Natural killer cell (primary cell): ENCODE measurements at regions of chr16 and their contacts with region 1.

Region 1: DNA sequence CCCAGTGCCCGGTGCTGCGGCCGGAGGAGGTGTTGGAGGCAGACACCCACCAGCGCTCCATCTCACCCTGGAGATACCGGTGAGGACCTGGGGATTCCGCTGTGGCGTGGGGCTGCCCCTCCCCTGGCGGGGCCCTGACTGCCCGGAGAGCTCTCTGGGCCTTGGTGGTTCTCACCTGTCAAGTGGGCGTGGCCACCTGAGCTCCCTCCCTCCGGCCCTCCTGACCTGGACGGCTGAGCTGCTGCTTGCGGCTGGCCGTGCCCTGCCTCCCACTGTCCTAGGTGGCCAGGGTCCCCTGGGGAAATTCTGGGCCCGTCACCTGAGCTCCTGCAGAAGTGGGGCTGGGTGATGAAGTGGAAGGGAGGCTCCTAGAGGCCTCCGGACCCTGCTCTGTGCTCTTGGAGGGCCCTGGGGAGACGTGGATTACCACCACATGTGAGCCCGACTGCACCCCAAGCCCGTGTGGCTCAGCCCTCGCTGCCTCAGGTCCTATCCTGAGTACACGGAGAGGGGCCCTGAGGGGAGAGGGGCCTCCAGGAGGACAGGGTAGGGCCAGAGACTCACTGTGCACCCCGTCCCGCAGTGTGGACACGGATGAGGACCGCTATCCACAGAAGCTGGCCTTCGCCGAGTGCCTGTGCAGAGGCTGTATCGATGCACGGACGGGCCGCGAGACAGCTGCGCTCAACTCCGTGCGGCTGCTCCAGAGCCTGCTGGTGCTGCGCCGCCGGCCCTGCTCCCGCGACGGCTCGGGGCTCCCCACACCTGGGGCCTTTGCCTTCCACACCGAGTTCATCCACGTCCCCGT is 1.1 kb downstream of the IL17C start:
- DNase-seq: peak; percentile 37 to 40
- ATAC-seq: peak in 1 of 3 donors; percentile 7
- H3K4me3 ChIP-seq: no peak overlapping the region
- H3K4me3 Mint-ChIP-seq: peak overlapping the region; percentile 64
- H3K27ac ChIP-seq: no peak overlapping the region
- H3K27ac Mint-ChIP-seq: peak overlapping the region; percentile 72 to 90
- H3K4me1 ChIP-seq: peaks cover 80% of the 10 kb centered on the region
- H3K4me1 Mint-ChIP-seq: peaks cover 31 to 67% of the 10 kb centered on the region in 2 donors
- H3K27me3 ChIP-seq: no peaks in the 10 kb centered on the region
- H3K27me3 Mint-ChIP-seq: peaks cover 0 to 3% of the 10 kb centered on the region in 2 donors
- CTCF ChIP-seq: no peak

Region 2: DNA sequence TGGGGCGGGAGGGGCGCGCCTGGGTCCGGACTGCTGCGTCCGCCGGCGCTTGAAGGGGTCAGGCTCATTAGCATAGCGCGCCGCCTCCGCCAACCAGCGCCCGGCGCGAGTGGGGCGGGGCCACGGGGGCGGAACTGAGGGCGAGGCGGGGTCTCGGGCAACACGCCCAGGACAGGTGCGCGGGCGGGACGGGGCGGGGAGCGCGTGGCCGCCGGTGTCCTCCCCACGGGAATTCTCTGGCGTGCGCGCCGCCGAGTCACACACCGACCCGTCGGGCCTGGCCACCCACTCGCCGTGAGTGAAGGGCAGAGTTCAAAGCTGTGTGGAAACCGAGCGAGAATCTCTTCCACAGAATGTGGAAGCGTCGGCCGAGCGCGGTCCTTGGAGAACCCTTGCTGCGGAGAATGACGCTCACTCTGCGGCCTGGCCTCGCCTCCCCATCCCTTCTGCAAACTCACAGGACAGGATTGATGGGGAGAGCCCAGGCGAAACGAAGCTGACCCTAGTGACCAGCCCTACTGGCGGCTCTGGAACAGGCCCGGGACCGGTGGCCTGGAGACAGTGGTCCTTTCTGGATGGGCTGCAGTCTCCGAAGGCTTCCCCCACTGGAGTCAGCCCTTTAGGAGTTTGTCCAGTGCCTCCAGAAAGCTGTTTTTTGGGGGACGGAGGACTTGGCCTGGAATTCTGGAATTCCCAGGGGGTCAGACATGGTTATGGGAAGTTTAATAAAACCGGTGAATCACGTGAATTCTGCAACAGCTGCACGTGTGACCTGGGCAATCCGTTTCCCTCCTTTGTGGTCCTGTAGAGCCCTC is 47.2 kb after region 1 on chr16 and contains the start of gene SNAI3:
- intact Hi-C with region 1: loop called (anchors 5 kb)
- DNase-seq: peak; percentile 88 to 89
- ATAC-seq: peak; percentile 86 to 94 (median 93)
- H3K4me3 ChIP-seq: peak within 1 kb of the TSS; percentile 92
- H3K4me3 Mint-ChIP-seq: peak within 1 kb of the TSS; percentile 84
- H3K27ac ChIP-seq: peak within 1 kb of the TSS; percentile 63
- H3K27ac Mint-ChIP-seq: peak within 1 kb of the TSS; percentile 36 to 73
- H3K4me1 ChIP-seq: peaks cover 55% of the 10 kb centered on the region
- H3K4me1 Mint-ChIP-seq: peaks cover 15 to 45% of the 10 kb centered on the region in 2 donors
- H3K27me3 ChIP-seq: no peaks in the 10 kb centered on the region
- H3K27me3 Mint-ChIP-seq: no peaks in the 10 kb centered on the region
- CTCF ChIP-seq: no peak
- total RNA-seq, gene SNAI3: 8.2 to 9.2 (median 8.4) TPM

Region 3: DNA sequence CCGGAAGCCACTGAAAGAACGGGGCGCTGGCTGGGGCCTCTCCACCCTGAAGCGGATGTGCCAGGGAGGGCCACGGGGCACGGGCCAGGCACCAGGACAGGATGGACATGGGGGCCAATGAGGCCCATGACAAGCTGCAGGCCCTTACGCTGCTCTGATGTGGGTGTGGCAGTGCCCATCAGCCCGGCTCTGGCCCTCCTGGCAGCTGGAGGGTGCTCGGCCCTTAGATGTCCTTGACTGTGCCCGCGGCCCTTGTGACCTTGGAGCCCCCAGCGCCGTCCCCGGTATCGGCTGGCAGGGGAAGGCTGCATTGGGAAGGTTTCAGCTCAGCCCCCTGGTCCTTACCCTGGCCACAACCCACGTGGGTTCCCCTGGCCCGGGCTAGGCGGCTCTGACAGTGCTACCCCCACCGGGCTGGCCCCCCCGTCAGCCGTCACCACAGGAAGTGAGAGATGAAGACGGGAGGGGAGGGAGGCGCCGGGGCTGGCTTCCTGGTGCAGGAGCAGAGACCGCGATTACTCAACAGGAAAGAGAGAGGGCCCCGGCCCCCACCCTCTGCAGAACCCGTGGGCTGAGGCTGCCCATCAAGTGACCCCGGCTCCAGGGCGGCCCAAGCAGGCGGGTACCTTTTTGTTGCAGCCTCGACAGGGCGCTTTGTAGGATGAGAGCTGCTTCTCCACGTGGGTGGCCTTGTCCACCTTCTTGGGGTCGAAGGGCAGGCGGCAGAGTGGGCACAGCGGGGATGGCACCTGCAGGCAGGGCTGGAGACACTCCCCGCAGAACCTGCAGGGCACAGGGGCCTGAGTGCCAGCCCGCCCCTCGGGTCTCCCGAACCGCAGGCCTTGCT is 61.4 kb after region 1 on chr16:
- intact Hi-C with region 1: loop called (anchors 5 kb)
- DNase-seq: peak; percentile 95 to 96
- ATAC-seq: peak; percentile 76 to 92 (median 82)
- H3K4me3 ChIP-seq: peak overlapping the region; percentile 67
- H3K4me3 Mint-ChIP-seq: peak overlapping the region; percentile 94
- H3K27ac ChIP-seq: peak overlapping the region; percentile 83
- H3K27ac Mint-ChIP-seq: peak overlapping the region; percentile 89 to 96
- H3K4me1 ChIP-seq: peaks cover 84% of the 10 kb centered on the region
- H3K4me1 Mint-ChIP-seq: peaks cover 53 to 70% of the 10 kb centered on the region in 2 donors
- H3K27me3 ChIP-seq: no peaks in the 10 kb centered on the region
- H3K27me3 Mint-ChIP-seq: no peaks in the 10 kb centered on the region
- CTCF ChIP-seq: no peak